ENCODE measurements at regions of chr6 and their contacts with region 1.

Region 1: DNA sequence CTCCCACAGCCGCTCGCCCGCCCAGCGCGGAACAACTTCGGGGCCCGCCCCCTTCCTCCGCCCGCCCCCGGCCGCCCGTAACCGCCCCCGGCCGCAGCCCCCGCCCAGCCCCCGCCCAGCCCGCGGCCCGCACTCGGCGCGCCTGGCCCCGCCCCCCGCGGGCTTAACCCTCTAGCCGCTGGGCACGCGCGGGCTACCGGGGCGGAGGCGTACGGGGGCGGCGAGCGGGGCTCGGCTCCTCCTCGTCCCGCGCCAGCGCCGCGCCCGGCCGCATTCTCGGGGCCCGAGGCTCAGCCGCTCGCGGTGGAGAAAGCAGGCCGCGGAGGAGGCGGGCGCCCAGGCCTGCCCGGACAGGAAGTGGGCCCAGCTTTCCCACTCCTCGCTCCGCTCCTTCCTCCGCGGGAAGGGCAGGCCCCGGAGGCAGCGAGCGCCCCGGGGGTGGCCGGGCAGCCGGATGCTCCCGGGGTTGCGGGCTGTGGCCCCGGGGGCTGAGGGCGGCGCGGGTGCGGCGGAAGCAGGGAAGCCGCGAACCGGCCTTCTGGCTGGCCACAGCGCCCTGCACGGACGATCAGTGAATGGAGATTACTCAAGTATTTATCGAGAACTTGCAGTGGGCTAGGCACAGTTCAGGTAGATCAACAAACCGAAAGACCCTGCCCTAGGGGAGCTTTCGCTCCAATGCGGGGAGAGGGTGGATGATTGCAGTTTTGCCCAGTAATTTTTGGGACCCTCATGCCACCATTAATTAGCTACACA is at the start of gene TRAM2:
- DNase-seq: peak; percentile 65
- H3K4me3 Mint-ChIP-seq: peak within 1 kb of the TSS; percentile 78
- H3K27ac Mint-ChIP-seq: peak within 1 kb of the TSS; percentile 65
- H3K4me1 Mint-ChIP-seq: peaks cover 43% of the 10 kb centered on the region
- H3K27me3 Mint-ChIP-seq: no peaks in the 10 kb centered on the region
- total RNA-seq, gene TRAM2: 2.5 to 2.9 TPM

Region 2: GRCh38 chr6:52297433-52297832 is 279.8 kb before region 1 on chr6:
- CTCF ChIA-PET with region 1: no interaction called
- intact Hi-C with region 1: loop called (anchors 5 kb)
- DNase-seq: peak; percentile 51
- H3K4me3 Mint-ChIP-seq: no peak overlapping the region
- H3K27ac Mint-ChIP-seq: peak overlapping the region; percentile 60
- H3K4me1 Mint-ChIP-seq: peaks cover 35% of the 10 kb centered on the region
- H3K27me3 Mint-ChIP-seq: no peaks in the 10 kb centered on the region

Region 3: DNA sequence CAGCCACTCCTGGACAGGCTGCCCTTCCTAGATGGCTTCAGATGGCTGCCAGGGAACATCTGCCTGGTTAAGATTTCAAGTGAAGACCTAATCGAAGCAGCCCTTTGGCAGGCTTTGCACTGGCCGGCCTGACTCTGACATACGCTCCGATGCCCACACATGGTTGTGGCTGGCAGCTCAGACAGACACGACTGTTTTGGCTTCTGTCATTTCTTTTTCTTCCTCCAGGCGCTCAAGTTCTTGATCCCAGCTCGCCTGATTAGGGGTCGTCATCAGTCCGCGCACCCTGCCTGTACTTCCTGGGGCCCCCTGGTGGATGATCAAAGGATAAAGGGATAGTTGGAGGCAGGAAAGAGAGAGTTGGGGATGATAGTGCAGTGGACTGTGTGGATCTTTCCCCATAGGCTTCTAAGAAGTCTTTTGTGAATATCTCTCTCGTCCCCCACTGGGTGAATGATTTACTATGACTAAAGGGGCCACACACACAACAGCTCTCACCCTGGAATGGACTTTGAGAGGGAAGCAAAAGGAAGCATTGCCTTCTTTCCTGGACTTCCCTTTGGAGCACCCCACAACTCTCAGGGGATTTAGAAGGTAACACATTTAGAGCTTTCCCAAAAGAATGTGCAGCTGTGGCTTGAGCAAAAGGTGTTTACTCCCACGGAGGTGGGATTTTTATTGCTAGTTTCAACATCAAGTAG is 21.1 kb after region 1 on chr6:
- CTCF ChIA-PET with region 1: interaction called, 10 read pairs
- intact Hi-C with region 1: loop called (anchors 2 kb)
- DNase-seq: peak; percentile 35
- H3K4me3 Mint-ChIP-seq: no peak overlapping the region
- H3K27ac Mint-ChIP-seq: no peak overlapping the region
- H3K4me1 Mint-ChIP-seq: peaks cover 14% of the 10 kb centered on the region
- H3K27me3 Mint-ChIP-seq: no peaks in the 10 kb centered on the region

Region 4: GRCh38 chr6:52664186-52664990 is 87.2 kb after region 1 on chr6:
- CTCF ChIA-PET with region 1: interaction called, 8 read pairs
- intact Hi-C with region 1: loop called (anchors 1 kb)
- DNase-seq: peak; percentile 86
- H3K4me3 Mint-ChIP-seq: no peak overlapping the region
- H3K27ac Mint-ChIP-seq: no peak overlapping the region
- H3K4me1 Mint-ChIP-seq: peaks cover 3% of the 10 kb centered on the region
- H3K27me3 Mint-ChIP-seq: no peaks in the 10 kb centered on the region

Region 5: GRCh38 chr6:53064726-53065215 is 487.6 kb after region 1 on chr6:
- CTCF ChIA-PET with region 1: no interaction called
- intact Hi-C with region 1: loop called (anchors 1 kb)
- DNase-seq: peak; percentile 99
- H3K4me3 Mint-ChIP-seq: peak overlapping the region; percentile 97
- H3K27ac Mint-ChIP-seq: peak overlapping the region; percentile 99
- H3K4me1 Mint-ChIP-seq: peaks cover 55% of the 10 kb centered on the region
- H3K27me3 Mint-ChIP-seq: no peaks in the 10 kb centered on the region

Region 6: GRCh38 chr6:53492860-53493634 is 915.8 kb after region 1 on chr6:
- CTCF ChIA-PET with region 1: no interaction called
- intact Hi-C with region 1: no loop called
- DNase-seq: peak; percentile 45
- H3K4me3 Mint-ChIP-seq: no peak overlapping the region
- H3K27ac Mint-ChIP-seq: no peak overlapping the region
- H3K4me1 Mint-ChIP-seq: peaks cover 10% of the 10 kb centered on the region
- H3K27me3 Mint-ChIP-seq: peaks cover 16% of the 10 kb centered on the region